BJ (cell line): ENCODE measurements at regions of chr17 and their contacts with region 1.

Region 1: DNA sequence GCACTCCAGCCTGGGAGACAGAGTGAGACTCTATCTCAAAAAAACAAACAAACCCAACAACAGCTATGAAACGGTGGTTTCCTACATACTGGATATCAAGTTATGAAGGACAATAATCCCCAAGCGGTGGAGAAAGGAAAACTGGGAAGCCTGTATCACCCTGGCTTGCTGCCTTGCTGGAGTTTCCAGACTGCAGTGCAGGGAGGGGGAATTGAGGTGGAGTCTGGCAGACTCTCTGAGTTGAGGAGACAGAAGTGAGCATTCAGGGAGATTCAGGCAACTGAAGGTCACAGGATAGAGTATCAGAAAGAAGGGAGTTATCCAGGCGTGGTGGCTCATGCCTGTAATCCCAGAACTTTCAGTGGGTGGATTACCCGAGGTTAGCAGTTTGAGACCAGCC is 11.9 kb downstream of the QRICH2 start:
- DNase-seq: no peak
- H3K4me3 ChIP-seq: no peak overlapping the region
- H3K27me3 ChIP-seq: no peaks in the 10 kb centered on the region
- CTCF ChIP-seq: no peak

Region 2: DNA sequence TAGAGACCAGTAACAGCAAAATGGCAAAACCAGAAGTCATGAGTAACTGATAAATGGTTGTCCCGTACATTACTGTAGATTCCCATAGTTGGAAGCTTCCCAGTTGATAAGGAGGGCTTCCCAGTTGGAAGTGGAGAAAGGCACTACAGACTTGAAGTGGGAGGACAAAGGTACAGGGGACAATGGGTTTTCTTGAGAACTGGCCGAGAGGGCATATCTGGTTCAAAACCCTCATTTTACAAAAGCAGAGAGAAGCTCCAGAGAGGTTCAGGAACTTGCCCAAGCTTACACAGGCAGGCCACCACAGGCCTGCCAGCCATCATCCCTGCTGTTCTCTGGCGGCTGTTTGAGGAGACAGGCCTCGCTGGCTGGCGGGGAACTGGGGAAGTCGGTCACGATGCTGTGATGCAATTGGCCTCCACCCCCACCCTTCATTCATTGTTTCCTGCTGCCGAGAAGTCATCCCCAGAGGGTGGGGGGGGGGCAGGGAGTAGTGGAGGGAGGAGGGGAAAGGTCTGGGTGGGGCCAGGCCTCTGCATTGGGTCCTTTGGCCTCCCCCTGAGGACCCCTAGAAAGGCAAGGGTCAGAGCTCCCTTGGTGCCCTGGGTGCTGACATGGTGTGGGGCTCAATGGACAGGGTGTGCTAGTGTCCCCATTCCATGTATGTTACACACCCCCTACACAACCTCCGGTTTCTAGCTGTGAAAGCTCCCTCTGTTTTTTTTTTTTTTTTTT is 28.0 kb before region 1 on chr17:
- CTCF ChIA-PET with region 1: no interaction called
- POLR2A ChIA-PET with region 1: no interaction called
- DNase-seq: no peak
- H3K4me3 ChIP-seq: no peak overlapping the region
- H3K27me3 ChIP-seq: no peaks in the 10 kb centered on the region
- CTCF ChIP-seq: no peak

Region 3: DNA sequence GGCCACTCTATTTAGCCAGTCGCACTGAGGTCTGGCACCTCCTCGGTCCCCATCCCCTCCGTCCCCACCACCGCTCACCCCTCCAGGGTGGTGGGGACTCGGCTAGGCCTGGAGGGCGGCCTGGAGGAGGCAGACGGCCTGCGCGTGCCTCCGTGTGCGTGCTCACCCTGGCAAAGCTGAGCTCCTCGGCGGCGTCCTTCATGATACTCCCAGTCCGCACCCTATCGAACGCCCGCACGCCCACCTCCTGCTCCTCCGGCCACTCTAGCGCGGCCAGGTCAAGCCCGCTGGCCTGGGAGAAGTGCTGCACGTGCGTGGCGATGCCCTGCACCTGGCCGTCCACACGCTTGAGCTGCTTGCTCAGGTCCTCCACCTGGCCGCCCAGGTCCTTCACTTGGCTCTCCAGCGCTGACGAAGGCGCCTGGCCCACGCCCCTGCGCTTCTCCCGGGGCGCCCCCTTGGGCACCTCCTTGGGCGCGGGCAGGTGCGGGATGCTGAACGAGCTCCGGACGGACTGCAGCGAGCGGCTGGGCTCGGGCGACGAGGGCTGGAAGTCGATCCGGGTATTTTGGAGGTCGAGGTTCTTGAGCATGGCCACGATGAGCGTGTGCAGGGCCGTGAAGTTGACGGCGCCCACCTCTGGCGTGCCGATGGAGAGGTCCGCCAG is 11.2 kb after region 1 on chr17:
- CTCF ChIA-PET with region 1: interaction called, 37 read pairs
- POLR2A ChIA-PET with region 1: no interaction called
- DNase-seq: no peak
- H3K4me3 ChIP-seq: no peak overlapping the region
- H3K27me3 ChIP-seq: no peaks in the 10 kb centered on the region
- CTCF ChIP-seq: no peak